ENCODE measurements at regions of chr12 and their contacts with region 1.

Region 1: DNA sequence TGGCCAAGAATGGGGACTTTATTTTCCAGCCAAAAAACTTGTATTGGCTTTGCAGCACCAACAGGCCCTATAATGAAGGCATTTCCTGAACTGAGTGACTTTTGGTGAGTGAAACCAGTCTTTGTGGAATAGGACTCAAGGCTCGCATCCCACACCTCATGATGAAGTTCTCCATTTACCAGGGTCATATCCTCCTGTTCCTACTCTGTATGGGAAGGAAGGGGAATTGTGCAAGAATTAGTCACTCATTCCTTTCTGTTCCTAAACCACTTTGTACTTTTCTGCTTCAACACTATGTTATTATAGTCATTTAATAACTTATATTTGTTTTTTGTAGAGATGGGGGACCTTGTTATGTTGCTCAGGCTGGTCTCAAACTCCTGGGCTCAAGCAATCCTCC is 2.3 kb upstream of the SPATS2 start:
- DNase-seq: no peak
- H3K4me3 ChIP-seq: no peak overlapping the region
- H3K27ac ChIP-seq: no peak overlapping the region
- H3K4me1 ChIP-seq: peaks cover 22 to 37% (median 27%) of the 10 kb centered on the region in 4 donors
- H3K27me3 ChIP-seq: peaks cover 0 to 4% (median 0%) of the 10 kb centered on the region in 3 donors
- CTCF ChIP-seq: no peak
- EP300 ChIP-seq: no peak
- POLR2A ChIP-seq: no peak

Region 2: GRCh38 chr12:49515266-49515665 is 150.3 kb after region 1 on chr12:
- intact Hi-C with region 1: loop called (anchors 5 kb)
- DNase-seq: no peak
- H3K4me3 ChIP-seq: no peak overlapping the region
- H3K27ac ChIP-seq: no peak overlapping the region
- H3K4me1 ChIP-seq: peaks cover 0 to 5% (median 2%) of the 10 kb centered on the region in 4 donors
- H3K27me3 ChIP-seq: no peaks in the 10 kb centered on the region
- CTCF ChIP-seq: no peak
- EP300 ChIP-seq: no peak
- POLR2A ChIP-seq: no peak

Measured in stomach (tissue), 19 donors.